Breast epithelium (tissue), 4 donors: ENCODE measurements at regions of chr3 and their contacts with region 1.

Region 1: DNA sequence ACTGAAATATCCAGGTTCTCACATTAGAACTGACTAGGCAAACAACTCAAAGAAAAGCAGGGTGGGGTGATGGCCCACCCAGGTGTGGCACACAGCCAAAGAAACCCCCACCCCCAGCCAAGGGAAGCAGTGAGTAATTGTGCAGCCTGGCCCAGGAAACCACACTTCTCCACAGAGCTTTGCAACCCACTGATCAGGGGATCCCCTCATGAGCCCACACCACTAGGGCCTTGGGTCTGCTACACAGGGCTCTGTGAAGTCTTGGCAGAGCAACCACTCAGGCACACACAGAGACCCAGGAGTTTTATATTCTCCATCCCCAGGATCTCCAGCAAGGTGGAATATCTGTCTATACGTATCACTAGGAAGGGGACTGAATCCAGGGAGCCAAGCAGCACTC is 22.2 kb upstream of the TRIM42 start:
- DNase-seq: no peak
- H3K4me3 ChIP-seq: no peak overlapping the region
- H3K27ac ChIP-seq: no peak overlapping the region
- H3K4me1 ChIP-seq: no peaks in the 10 kb centered on the region
- H3K27me3 ChIP-seq: no peaks in the 10 kb centered on the region
- CTCF ChIP-seq: no peak
- POLR2A ChIP-seq: no peak

Region 2: DNA sequence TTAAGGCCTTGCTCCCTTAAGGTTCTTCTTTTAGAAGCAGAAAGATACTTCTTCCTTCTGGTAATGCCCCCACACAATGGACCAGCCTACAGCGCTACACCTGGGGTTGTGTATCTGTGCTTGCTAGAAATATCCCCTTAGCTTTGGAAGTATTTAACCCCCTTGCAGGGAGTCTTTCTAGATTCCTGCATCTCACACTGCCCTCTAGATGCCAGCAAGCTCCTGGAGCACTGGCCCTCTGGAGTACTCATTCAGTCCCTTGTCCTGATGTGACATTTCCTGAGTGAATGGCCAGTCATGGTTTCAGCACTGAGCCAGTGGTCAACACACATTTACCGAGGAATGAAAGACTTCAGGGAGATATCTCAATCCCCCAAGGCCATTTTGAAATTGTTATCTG is 1148.9 kb before region 1 on chr3:
- intact Hi-C with region 1: loop called (anchors 5 kb)
- DNase-seq: no peak
- H3K4me3 ChIP-seq: no peak overlapping the region
- H3K27ac ChIP-seq: no peak overlapping the region
- H3K4me1 ChIP-seq: no peaks in the 10 kb centered on the region
- H3K27me3 ChIP-seq: no peaks in the 10 kb centered on the region
- CTCF ChIP-seq: no peak
- POLR2A ChIP-seq: no peak

Region 3: GRCh38 chr3:140686948-140687347 is 31.3 kb after region 1 on chr3:
- intact Hi-C with region 1: no loop called
- DNase-seq: no peak
- H3K4me3 ChIP-seq: no peak overlapping the region
- H3K27ac ChIP-seq: no peak overlapping the region
- H3K4me1 ChIP-seq: no peaks in the 10 kb centered on the region
- H3K27me3 ChIP-seq: no peaks in the 10 kb centered on the region
- CTCF ChIP-seq: no peak
- POLR2A ChIP-seq: no peak

Region 4: DNA sequence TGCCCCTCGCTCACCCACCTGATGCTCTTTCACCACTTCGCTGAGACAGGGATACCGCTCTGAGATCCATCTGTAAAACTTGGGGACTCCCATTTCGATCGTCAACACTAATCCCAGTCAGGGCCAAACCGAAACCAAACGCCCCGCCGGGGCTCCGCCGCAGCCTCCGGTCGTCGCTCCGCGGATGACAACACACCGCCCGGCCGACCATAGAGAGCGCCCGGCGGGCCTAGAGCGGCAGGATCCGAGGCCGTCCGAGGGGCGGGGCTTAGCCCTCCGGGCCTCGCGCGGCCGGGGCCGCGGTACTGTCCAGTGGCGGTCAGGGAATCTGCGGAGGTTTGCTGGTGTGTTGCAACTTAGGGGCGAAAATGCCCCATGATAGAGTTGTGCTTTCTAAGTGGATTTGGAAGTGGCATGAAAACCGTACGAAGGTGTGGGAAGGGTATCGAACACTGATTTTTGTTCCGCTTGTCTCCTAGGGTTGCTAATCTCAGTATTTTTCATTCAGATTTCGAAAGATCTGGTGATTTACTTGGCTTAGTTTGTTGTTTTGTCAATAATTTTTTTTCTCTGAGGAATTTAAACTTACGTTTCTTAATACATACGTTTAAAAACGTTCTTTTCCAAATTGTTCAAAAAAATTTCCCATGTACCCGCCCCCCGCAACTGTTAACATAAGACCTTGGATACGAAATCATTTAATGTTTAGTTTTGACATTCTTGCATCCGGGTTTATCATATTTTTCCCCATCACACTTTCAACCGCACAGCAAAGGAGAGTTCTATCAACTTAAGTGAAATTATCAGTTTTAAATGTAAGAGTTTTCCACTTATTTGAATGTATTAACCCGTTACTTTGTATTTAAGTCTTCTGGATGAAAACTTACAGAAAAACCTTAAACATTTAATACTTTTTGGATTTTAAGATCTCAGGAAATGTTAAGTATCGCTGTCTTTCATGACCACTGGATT is 1792.5 kb after region 1 on chr3 and contains the start of gene XRN1:
- intact Hi-C with region 1: no loop called
- DNase-seq: peak; percentile 90 to 93
- H3K4me3 ChIP-seq: peak within 1 kb of the TSS; percentile 84 to 99 (median 96)
- H3K27ac ChIP-seq: peak within 1 kb of the TSS; percentile 99 to 100
- H3K4me1 ChIP-seq: no peaks in the 10 kb centered on the region
- H3K27me3 ChIP-seq: no peaks in the 10 kb centered on the region
- CTCF ChIP-seq: no peak
- POLR2A ChIP-seq: peak; percentile 69
- total RNA-seq, gene XRN1: 44.5 to 81.1 (median 51.5) TPM